Activated B cell treated with CpG ODN at 0.5 μM for 24 hours (primary cell): ENCODE measurements at regions of chr6 and their contacts with region 1.

Region 1: GRCh38 chr6:31087494-31088089 is 24.8 kb downstream of the C6orf15 start:
- DNase-seq: peak; percentile 67
- ATAC-seq: peak; percentile 96
- H3K4me3 Mint-ChIP-seq: no peak overlapping the region
- H3K27ac Mint-ChIP-seq: no peak overlapping the region
- H3K4me1 Mint-ChIP-seq: peaks cover 4% of the 10 kb centered on the region
- H3K27me3 Mint-ChIP-seq: peaks cover 17% of the 10 kb centered on the region
- CTCF ChIP-seq: peak; percentile 37

Region 2: GRCh38 chr6:30295837-30296236 is 791.8 kb before region 1 on chr6:
- CTCF ChIA-PET with region 1: no interaction called
- POLR2A ChIA-PET with region 1: no interaction called
- intact Hi-C with region 1: no loop called
- DNase-seq: no peak
- ATAC-seq: no peak
- H3K4me3 Mint-ChIP-seq: no peak overlapping the region
- H3K27ac Mint-ChIP-seq: no peak overlapping the region
- H3K4me1 Mint-ChIP-seq: no peaks in the 10 kb centered on the region
- H3K27me3 Mint-ChIP-seq: no peaks in the 10 kb centered on the region
- CTCF ChIP-seq: no peak

Region 3: DNA sequence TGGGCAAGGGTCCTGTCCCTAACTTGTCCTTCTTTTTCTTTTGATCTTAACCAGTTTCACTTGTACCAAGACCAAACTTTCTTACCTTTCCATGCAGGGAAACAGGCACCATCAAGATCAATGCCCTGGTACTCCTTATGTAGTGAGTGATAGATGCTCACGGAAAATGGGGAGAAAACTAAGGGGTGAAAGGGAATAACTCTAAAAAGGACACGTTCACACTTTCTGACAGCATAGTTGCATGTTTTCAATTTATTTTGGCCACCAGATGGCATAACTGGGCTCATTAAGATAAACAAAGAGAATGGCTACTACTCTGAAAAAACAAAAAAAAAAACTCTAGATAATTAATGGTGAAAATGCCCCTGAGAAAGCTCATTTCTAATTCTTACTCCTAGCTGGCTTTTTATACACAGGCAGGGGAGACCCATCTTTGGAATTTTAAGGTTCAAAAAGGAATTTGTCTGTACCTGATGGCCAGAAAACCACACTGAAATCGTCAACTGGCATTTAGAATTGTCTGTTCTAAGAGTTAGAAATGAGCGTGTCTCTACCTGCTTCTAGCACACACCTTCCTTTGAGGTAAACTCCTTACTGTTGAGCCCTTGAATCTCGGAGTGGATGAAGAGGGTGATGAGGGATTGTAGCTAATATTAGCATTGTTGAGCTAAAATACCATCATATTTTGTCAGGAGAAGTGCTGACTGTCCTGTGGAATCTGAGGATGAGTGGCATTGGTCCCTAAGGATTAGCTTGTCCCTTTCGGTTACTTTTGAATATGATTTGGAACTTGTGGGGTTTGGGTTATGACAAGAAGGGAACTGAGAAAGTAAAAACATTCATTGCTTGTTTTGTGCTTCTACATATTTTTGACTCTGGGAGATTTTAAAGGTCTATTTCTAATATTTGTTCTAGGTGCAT is 265.5 kb before region 1 on chr6:
- CTCF ChIA-PET with region 1: interaction called, 73 read pairs
- POLR2A ChIA-PET with region 1: no interaction called
- intact Hi-C with region 1: no loop called
- DNase-seq: no peak
- ATAC-seq: no peak
- H3K4me3 Mint-ChIP-seq: no peak overlapping the region
- H3K27ac Mint-ChIP-seq: no peak overlapping the region
- H3K4me1 Mint-ChIP-seq: peaks cover 6% of the 10 kb centered on the region
- H3K27me3 Mint-ChIP-seq: peaks cover 9% of the 10 kb centered on the region
- CTCF ChIP-seq: no peak

Region 4: GRCh38 chr6:31143148-31143547 is 55.6 kb after region 1 on chr6:
- CTCF ChIA-PET with region 1: no interaction called
- POLR2A ChIA-PET with region 1: no interaction called
- intact Hi-C with region 1: no loop called
- DNase-seq: no peak
- ATAC-seq: no peak
- H3K4me3 Mint-ChIP-seq: no peak overlapping the region
- H3K27ac Mint-ChIP-seq: no peak overlapping the region
- H3K4me1 Mint-ChIP-seq: peaks cover 3% of the 10 kb centered on the region
- H3K27me3 Mint-ChIP-seq: no peaks in the 10 kb centered on the region
- CTCF ChIP-seq: no peak

Region 5: DNA sequence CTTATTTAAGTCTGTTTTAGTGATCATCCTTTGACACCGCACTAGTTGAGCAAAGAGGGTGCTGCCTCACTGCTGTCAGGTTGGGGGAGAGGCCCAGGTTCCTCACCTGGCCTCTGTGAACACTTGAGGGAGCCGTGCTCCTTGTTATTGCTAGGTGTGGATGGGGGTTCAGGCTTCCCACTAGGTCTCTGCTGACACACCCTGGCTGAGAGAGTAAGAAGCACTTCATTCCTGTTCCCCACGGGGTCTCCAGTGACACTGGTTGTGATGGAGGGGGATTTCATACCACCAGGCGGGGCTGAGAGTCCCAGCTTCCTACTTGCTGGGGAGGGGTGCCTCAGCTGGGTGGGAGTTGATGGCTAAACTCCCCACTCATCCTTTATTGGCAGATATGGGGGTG is 1147.3 kb after region 1 on chr6:
- CTCF ChIA-PET with region 1: no interaction called
- POLR2A ChIA-PET with region 1: no interaction called
- intact Hi-C with region 1: no loop called
- DNase-seq: no peak
- ATAC-seq: no peak
- H3K4me3 Mint-ChIP-seq: no peak overlapping the region
- H3K27ac Mint-ChIP-seq: no peak overlapping the region
- H3K4me1 Mint-ChIP-seq: no peaks in the 10 kb centered on the region
- H3K27me3 Mint-ChIP-seq: peaks cover 3% of the 10 kb centered on the region
- CTCF ChIP-seq: no peak